MCF 10A (cell line): ENCODE measurements at regions of chr2 and their contacts with region 1.

Region 1: DNA sequence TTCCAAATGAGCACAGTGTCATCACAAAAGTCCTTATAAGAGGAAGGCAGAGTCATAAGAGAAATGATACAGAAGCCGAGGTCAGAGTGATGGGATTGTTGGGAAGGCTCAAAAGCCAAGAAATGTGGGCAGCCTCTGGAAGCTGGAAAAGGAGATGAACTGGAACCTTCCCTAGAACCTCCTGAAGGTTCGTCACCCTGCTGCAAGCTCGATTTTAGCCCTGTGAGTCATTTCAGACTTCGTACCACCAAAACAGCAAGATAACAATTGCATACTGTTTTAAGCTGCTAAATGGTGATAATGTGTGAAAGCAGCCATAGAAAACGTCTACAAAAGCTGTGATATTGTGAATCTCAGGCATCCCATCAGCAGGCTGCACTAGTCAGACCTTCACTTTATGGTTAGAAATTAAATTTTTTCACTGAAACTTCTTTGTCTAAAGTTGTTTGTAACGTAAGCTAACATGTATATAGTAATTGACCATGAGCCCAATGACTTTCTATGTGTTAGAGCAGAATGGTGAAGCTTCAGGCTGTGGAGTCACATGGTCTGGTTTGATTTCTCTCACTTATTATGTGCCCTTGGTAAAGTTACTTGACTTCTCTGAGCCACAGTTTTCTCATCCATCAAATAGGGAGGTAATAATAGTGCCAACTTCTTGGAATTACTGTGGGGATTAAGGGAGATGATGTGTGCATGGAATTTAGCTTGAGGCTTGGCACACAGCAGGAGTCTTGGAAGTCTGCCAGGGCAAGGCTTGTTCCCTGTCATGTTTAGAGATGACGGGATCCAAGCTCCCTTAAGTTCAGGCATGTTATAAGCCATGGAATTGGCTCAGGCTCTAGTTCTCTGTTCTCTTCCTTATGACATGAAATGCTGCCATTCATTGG is 132.0 kb upstream of the CCDC195 start:
- DNase-seq: peak; percentile 98
- H3K4me3 Mint-ChIP-seq: no peak overlapping the region
- H3K27ac Mint-ChIP-seq: no peak overlapping the region
- H3K4me1 Mint-ChIP-seq: peaks cover 19% of the 10 kb centered on the region
- H3K27me3 Mint-ChIP-seq: no peaks in the 10 kb centered on the region
- CTCF ChIP-seq: no peak

Region 2: GRCh38 chr2:224691563-224691962 is 156.6 kb before region 1 on chr2:
- CTCF ChIA-PET with region 1: no interaction called
- POLR2A ChIA-PET with region 1: no interaction called
- intact Hi-C with region 1: no loop called
- DNase-seq: peak; percentile 7
- H3K4me3 Mint-ChIP-seq: no peak overlapping the region
- H3K27ac Mint-ChIP-seq: no peak overlapping the region
- H3K4me1 Mint-ChIP-seq: peaks cover 6% of the 10 kb centered on the region
- H3K27me3 Mint-ChIP-seq: no peaks in the 10 kb centered on the region
- CTCF ChIP-seq: no peak

Region 3: DNA sequence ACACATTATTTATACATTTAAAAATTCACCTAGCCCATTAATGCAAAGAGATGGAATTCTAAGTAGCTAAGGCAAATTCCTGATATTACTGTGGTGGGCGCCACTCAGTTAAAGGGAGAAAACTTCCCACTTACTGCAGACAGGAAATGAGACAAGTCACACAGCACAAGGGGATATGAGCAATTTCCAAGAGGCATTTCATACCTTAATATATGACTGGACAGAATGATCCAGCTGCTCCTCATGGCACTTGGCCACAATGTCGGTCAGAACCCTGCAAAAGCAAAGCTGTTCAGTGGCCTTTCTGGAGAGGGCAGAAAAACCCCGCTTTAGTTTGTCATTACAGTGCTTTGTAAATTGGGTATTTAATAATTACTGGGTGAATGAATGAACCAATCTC is 10.6 kb before region 1 on chr2:
- CTCF ChIA-PET with region 1: no interaction called
- POLR2A ChIA-PET with region 1: interaction called, 20 read pairs
- intact Hi-C with region 1: no loop called
- DNase-seq: peak; percentile 75
- H3K4me3 Mint-ChIP-seq: no peak overlapping the region
- H3K27ac Mint-ChIP-seq: peak overlapping the region; percentile 4
- H3K4me1 Mint-ChIP-seq: peaks cover 28% of the 10 kb centered on the region
- H3K27me3 Mint-ChIP-seq: no peaks in the 10 kb centered on the region
- CTCF ChIP-seq: no peak

Region 4: GRCh38 chr2:224861261-224861660 is 13.1 kb after region 1 on chr2:
- CTCF ChIA-PET with region 1: interaction called, 5 read pairs
- POLR2A ChIA-PET with region 1: interaction called, 26 read pairs
- intact Hi-C with region 1: no loop called
- DNase-seq: peak; percentile 53
- H3K4me3 Mint-ChIP-seq: no peak overlapping the region
- H3K27ac Mint-ChIP-seq: peak overlapping the region; percentile 35
- H3K4me1 Mint-ChIP-seq: peaks cover 7% of the 10 kb centered on the region
- H3K27me3 Mint-ChIP-seq: no peaks in the 10 kb centered on the region
- CTCF ChIP-seq: no peak